CD4-positive, alpha-beta T cell (primary cell): ENCODE measurements at regions of chr14 and their contacts with region 1.

Region 1: DNA sequence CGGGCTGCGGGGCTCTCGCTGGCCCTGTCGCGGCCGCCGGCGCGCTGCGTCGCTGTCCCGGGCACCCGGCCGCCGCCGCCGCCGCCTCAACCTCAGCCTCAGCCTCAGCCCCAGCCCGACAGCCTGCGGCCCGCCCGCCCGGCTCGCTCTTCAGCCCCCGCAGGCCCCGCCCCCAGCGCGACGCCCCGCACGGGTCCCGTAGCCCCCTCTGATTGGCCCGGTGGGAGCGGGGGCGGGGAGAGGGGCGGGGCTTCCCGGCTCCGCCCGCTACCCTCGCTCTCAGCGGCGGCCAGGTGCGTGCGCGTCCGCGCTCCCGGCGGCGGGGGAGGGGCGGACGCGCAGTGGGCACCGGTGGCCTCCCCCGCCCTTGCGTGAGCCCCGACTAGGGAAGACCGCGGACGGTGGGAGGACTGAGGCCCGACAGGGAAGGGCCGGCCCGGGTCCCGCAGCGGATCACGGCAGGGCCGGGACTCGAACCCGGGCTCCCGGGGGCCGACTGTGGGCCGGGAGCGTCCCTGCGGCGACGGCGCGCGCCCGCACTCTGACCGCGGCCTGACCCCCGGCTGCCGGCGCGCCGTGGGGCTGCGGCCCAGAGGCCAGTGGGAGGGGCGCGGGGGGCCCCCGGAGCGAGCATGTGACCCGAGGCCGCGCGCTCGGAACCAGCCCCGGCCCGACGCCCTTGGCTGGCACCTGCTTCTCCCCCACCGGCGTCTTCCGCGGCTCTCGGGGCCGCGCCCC is at the start of gene PPP1R13B:
- DNase-seq: peak; percentile 86 to 97 (median 94)
- ATAC-seq: peak; percentile 97
- H3K4me3 ChIP-seq: peak within 1 kb of the TSS; percentile 74
- H3K4me3 Mint-ChIP-seq: peak within 1 kb of the TSS; percentile 95
- H3K27ac ChIP-seq: no peak within 1 kb of the TSS
- H3K27ac Mint-ChIP-seq: peak within 1 kb of the TSS; percentile 78
- H3K4me1 ChIP-seq: peaks cover 14% of the 10 kb centered on the region
- H3K4me1 Mint-ChIP-seq: peaks cover 23% of the 10 kb centered on the region
- H3K27me3 ChIP-seq: no peaks in the 10 kb centered on the region
- H3K27me3 Mint-ChIP-seq: no peaks in the 10 kb centered on the region
- CTCF ChIP-seq: no peak
- total RNA-seq, gene PPP1R13B: 14.3 to 14.4 TPM

Region 2: DNA sequence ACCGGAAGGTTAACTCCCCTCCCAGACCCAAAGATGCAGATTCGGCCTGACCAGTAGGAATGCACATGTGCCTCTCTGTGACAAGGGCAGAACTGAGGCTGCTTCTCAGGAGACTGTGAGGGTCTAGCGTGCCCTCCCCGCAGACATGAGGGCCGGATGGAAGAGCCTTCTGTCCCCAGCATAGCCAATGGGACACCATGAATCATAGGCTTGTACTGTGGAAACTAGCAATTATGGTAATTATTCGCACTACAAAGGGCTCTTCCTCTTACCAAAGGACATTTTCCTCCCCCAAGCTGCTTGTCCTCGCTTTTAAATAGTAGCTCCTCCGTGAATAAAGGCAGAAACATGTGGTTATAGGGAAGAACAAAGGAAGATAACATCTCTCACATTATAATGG is 278.7 kb before region 1 on chr14:
- CTCF ChIA-PET with region 1: no interaction called
- POLR2A ChIA-PET with region 1: no interaction called
- intact Hi-C with region 1: loop called in 1 of 2 experiments (anchors 5 kb)
- DNase-seq: no peak
- ATAC-seq: no peak
- H3K4me3 ChIP-seq: no peak overlapping the region
- H3K4me3 Mint-ChIP-seq: no peak overlapping the region
- H3K27ac ChIP-seq: no peak overlapping the region
- H3K27ac Mint-ChIP-seq: no peak overlapping the region
- H3K4me1 ChIP-seq: peaks cover 11% of the 10 kb centered on the region
- H3K4me1 Mint-ChIP-seq: peaks cover 13% of the 10 kb centered on the region
- H3K27me3 ChIP-seq: no peaks in the 10 kb centered on the region
- H3K27me3 Mint-ChIP-seq: no peaks in the 10 kb centered on the region
- CTCF ChIP-seq: no peak

Region 3: DNA sequence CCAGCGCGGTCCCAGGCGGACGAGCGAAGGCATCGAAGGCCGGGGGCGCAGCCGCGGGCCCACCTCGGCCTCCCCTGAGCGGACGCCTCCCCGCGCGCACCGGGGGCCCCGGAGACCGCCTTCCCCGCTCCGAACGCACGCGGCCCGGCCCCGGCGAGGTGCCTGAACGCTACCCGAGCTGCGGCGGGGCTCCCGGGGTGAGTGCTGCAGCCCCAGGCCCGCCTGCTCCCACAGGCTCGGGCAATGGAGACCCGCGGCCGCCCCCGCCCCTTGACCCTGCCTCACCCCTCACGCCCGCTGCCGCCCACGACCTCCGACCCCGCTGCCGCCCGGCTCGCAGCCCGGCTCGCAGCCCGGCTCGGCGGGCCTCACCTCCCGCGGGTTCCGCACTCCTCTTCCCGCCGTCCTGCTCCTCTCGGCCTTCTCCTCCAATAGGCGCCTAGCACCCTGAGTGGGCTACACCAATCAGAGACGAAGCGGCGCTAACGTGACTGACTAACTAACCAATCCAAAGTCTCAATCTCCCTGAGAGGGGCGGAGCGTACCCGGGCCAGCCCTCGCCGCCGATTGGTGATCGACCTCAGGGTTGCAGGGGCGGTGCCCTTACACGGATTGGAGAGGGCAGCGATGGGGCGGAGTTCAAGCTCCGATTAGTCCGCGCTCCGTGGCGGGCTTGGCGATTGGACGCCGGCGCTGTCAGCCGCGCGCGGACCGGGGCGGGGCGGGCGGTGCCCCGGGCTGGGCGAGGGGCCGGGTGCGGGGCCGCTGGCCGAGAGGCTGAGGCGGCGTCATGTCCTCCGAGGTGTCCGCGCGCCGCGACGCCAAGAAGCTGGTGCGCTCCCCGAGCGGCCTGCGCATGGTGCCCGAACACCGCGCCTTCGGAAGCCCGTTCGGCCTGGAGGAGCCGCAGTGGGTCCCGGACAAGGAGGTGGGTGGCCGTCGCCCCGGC is 132.3 kb before region 1 on chr14 and contains the starts of genes XRCC3 and ZFYVE21:
- CTCF ChIA-PET with region 1: no interaction called
- POLR2A ChIA-PET with region 1: no interaction called
- intact Hi-C with region 1: loop called in 1 of 2 experiments (anchors 2 kb)
- DNase-seq: peak; percentile 99 to 100 (median 99)
- ATAC-seq: peak; percentile 93
- H3K4me3 ChIP-seq: peak within 1 kb of the TSS; percentile 51
- H3K4me3 Mint-ChIP-seq: peak within 1 kb of the TSS; percentile 94
- H3K27ac ChIP-seq: no peak within 1 kb of the TSS
- H3K27ac Mint-ChIP-seq: peak within 1 kb of the TSS; percentile 84
- H3K4me1 ChIP-seq: peaks cover 39% of the 10 kb centered on the region
- H3K4me1 Mint-ChIP-seq: peaks cover 43% of the 10 kb centered on the region
- H3K27me3 ChIP-seq: no peaks in the 10 kb centered on the region
- H3K27me3 Mint-ChIP-seq: no peaks in the 10 kb centered on the region
- CTCF ChIP-seq: no peak
- total RNA-seq, gene XRCC3: 4.6 to 4.8 TPM
- total RNA-seq, gene ZFYVE21: 2.6 to 3.0 TPM

Region 4: DNA sequence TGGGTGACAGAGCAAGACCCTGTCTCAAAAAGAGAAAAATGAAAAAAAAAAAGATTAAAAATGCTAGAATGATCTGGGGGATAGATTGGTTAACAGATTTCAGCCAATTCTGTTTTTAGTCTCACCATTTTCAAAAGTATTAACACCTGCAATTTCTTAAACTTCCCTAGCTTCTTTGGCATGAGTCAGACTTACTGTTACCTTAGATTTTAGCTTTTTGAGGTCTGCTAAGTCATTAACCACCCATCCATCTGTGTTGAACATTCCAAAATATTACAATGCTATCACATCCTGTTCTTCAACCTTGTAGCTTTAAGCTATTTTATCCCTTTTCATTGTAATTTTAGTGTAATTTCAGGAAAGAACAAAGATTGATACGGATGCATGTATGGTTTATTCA is 59.5 kb before region 1 on chr14:
- CTCF ChIA-PET with region 1: no interaction called
- POLR2A ChIA-PET with region 1: no interaction called
- intact Hi-C with region 1: no loop called
- DNase-seq: no peak
- ATAC-seq: no peak
- H3K4me3 ChIP-seq: no peak overlapping the region
- H3K4me3 Mint-ChIP-seq: no peak overlapping the region
- H3K27ac ChIP-seq: no peak overlapping the region
- H3K27ac Mint-ChIP-seq: no peak overlapping the region
- H3K4me1 ChIP-seq: no peaks in the 10 kb centered on the region
- H3K4me1 Mint-ChIP-seq: no peaks in the 10 kb centered on the region
- H3K27me3 ChIP-seq: no peaks in the 10 kb centered on the region
- H3K27me3 Mint-ChIP-seq: no peaks in the 10 kb centered on the region
- CTCF ChIP-seq: no peak

Region 5: GRCh38 chr14:103808403-103809001 is 39.1 kb before region 1 on chr14:
- CTCF ChIA-PET with region 1: no interaction called
- POLR2A ChIA-PET with region 1: no interaction called
- intact Hi-C with region 1: loop called in 1 of 2 experiments (anchors 5 kb)
- DNase-seq: peak; percentile 45 to 82 (median 59)
- ATAC-seq: peak; percentile 88
- H3K4me3 ChIP-seq: no peak overlapping the region
- H3K4me3 Mint-ChIP-seq: no peak overlapping the region
- H3K27ac ChIP-seq: no peak overlapping the region
- H3K27ac Mint-ChIP-seq: no peak overlapping the region
- H3K4me1 ChIP-seq: no peaks in the 10 kb centered on the region
- H3K4me1 Mint-ChIP-seq: peaks cover 8% of the 10 kb centered on the region
- H3K27me3 ChIP-seq: no peaks in the 10 kb centered on the region
- H3K27me3 Mint-ChIP-seq: no peaks in the 10 kb centered on the region
- CTCF ChIP-seq: peak; percentile 84

Region 6: DNA sequence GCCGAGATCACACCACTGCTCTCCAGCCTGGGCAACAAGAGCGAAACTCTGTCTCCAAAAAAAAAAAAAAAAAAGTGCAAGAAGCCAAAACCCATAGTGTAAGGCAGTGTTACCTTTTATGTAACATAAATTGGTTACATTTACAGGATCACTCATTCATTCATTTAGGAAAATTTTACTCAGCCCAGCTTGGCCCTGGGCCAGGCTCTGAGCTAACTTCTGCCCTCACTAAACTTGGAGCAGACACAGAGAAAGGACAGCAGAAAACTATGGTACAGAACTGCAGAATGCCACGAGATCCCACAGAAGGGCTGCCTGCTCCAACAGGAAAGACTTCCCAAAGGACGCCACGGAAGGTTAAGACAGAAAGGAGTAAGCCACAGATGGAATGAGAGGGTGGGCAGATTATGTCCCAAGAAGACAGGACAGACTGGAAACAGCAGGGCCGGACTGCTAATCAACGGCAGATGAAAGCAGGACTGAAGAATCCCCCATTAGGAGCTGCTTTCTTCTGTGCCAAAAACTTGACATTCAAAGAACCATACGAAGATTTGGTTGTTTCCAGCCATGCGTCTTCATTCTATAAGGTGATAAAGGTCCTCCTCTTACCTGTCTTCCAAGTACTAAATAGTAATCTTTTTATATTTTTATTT is 19.2 kb before region 1 on chr14:
- CTCF ChIA-PET with region 1: no interaction called
- POLR2A ChIA-PET with region 1: no interaction called
- intact Hi-C with region 1: no loop called
- DNase-seq: no peak
- ATAC-seq: no peak
- H3K4me3 ChIP-seq: no peak overlapping the region
- H3K4me3 Mint-ChIP-seq: no peak overlapping the region
- H3K27ac ChIP-seq: no peak overlapping the region
- H3K27ac Mint-ChIP-seq: no peak overlapping the region
- H3K4me1 ChIP-seq: no peaks in the 10 kb centered on the region
- H3K4me1 Mint-ChIP-seq: peaks cover 11% of the 10 kb centered on the region
- H3K27me3 ChIP-seq: no peaks in the 10 kb centered on the region
- H3K27me3 Mint-ChIP-seq: no peaks in the 10 kb centered on the region
- CTCF ChIP-seq: no peak

Region 7: DNA sequence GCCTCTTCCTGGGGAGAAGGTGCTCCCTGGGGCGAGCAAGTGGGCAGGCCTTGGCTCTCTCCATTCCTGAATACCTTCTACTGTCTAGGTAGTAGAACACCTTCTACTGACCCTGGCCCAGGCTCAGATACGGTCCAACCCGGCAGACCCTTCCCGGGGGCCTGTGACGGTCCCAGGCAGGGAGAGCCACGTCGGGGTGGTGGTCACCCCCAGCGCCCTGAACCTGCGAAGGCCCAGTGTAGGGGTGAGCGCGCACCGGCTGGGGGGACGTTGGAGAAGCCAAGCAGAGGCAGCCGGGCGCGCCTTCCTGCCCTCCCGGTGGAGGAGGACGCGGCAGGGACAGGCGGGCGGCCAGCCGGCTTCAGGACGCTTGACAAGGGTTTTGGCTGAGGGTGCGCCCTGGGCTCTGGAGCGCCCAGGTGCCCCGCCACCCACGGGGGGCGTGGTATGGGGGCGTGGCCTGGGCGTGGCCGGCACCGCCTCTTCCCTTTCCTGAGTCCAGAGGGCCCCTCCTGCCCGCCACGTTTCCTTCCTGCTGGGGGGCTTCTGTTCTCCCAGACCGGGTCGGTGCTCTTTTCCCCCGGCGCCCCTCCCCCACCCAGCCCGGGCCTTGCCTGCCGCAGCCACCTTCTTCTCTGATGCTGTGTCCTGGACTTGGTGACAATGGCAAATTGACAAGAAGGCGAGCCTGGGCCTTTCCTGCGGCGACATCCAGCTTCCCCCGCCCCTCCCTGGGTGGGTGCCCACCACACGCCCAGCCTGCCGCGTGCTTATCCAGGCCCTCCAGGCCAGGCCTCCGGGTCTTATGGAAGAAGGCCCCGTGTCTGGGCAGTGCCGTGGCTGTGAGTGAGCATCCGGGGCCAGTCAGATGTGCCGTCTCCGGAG is 24.2 kb after region 1 on chr14:
- CTCF ChIA-PET with region 1: no interaction called
- POLR2A ChIA-PET with region 1: interaction called, 3 read pairs
- intact Hi-C with region 1: loop called in 1 of 2 experiments (anchors 1 kb)
- DNase-seq: peak; percentile 50 to 86 (median 72)
- ATAC-seq: peak; percentile 82
- H3K4me3 ChIP-seq: peak overlapping the region; percentile 70
- H3K4me3 Mint-ChIP-seq: peak overlapping the region; percentile 90
- H3K27ac ChIP-seq: peak overlapping the region in 1 of 2 donors; percentile 52
- H3K27ac Mint-ChIP-seq: peak overlapping the region; percentile 84
- H3K4me1 ChIP-seq: peaks cover 20% of the 10 kb centered on the region
- H3K4me1 Mint-ChIP-seq: peaks cover 16% of the 10 kb centered on the region
- H3K27me3 ChIP-seq: no peaks in the 10 kb centered on the region
- H3K27me3 Mint-ChIP-seq: no peaks in the 10 kb centered on the region
- CTCF ChIP-seq: no peak

Region 8: DNA sequence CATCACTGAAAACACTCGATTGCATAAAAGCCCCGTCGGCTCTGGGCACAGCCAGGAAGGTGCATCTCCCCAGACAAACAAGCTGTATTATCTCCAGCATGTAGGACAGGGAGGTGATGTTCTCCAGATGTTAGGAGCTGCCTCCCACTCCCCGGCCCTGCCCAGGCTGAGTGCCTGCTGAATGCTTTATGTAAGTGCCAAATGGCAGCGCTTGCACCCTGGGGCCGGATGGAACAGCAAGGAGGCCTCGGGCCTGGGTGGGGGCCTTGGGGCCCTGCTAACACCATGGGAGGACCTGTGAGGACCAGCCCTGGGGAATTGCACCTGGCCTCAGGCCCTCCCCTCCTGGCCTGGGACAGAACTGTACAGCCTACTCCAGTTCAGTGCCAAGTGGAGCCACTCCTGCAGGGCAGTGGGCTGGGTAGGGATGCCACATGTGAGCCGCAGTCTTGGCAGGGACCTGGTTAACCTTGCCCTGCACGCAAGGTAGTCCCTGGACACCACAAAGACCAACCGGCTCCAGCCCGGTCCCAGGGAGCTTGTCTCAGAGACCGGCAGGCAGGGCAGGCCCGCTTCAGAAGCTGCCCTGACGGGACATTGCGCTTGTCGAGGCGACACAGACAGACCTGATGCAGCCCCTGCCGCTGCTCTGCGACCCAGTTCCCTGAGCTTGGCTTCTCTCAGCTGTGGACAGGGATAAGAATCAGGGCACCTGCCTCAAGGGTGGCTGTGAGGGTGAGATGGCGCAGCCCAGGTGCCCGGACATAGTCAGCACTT is 35.1 kb after region 1 on chr14:
- CTCF ChIA-PET with region 1: no interaction called
- POLR2A ChIA-PET with region 1: no interaction called
- intact Hi-C with region 1: no loop called
- DNase-seq: no peak
- ATAC-seq: no peak
- H3K4me3 ChIP-seq: no peak overlapping the region
- H3K4me3 Mint-ChIP-seq: no peak overlapping the region
- H3K27ac ChIP-seq: no peak overlapping the region
- H3K27ac Mint-ChIP-seq: no peak overlapping the region
- H3K4me1 ChIP-seq: peaks cover 17% of the 10 kb centered on the region
- H3K4me1 Mint-ChIP-seq: peaks cover 20% of the 10 kb centered on the region
- H3K27me3 ChIP-seq: peaks cover 0 to 5% of the 10 kb centered on the region in 2 experiments
- H3K27me3 Mint-ChIP-seq: no peaks in the 10 kb centered on the region
- CTCF ChIP-seq: no peak

Region 9: GRCh38 chr14:104064003-104064402 is 216.4 kb after region 1 on chr14:
- CTCF ChIA-PET with region 1: no interaction called
- POLR2A ChIA-PET with region 1: no interaction called
- intact Hi-C with region 1: no loop called
- DNase-seq: no peak
- ATAC-seq: no peak
- H3K4me3 ChIP-seq: no peak overlapping the region
- H3K4me3 Mint-ChIP-seq: no peak overlapping the region
- H3K27ac ChIP-seq: no peak overlapping the region
- H3K27ac Mint-ChIP-seq: no peak overlapping the region
- H3K4me1 ChIP-seq: no peaks in the 10 kb centered on the region
- H3K4me1 Mint-ChIP-seq: no peaks in the 10 kb centered on the region
- H3K27me3 ChIP-seq: peaks cover 12 to 27% of the 10 kb centered on the region in 2 experiments
- H3K27me3 Mint-ChIP-seq: peaks cover 82% of the 10 kb centered on the region
- CTCF ChIP-seq: no peak